BJ (cell line): ENCODE measurements at regions of chr5 and their contacts with region 1.

Region 1: DNA sequence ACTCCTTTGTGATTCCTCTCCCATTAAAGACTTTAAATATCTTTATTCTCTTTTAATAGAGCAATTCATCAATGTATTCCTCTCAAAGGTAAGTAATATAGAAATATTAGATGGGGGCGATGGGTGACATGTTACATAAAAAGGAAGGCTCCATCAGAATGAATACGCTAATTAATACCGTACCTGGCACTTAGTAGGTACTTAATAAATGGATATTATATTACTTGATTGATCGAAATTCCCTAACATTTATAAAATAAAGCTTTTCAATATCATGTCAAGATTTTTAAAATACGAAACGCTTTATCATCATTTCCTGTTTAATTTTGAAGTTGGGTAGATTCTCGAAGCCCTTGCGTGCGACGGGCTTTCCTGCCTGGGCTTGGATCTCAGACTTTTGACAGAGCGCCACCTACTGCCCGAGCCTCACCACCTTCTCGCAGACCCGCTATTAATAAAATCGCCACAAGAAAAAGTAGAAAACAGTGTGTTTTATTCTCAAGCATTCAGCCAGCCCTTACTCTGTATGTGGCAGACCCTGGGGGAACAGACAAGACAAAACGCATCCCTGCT is 99.4 kb downstream of the C5orf15 start:
- DNase-seq: peak; percentile 22
- H3K4me3 ChIP-seq: no peak overlapping the region
- H3K27me3 ChIP-seq: peaks cover 3% of the 10 kb centered on the region
- CTCF ChIP-seq: peak; percentile 81

Region 2: GRCh38 chr5:133111299-133111698 is 757.7 kb before region 1 on chr5:
- CTCF ChIA-PET with region 1: interaction called, 11 read pairs
- POLR2A ChIA-PET with region 1: no interaction called
- DNase-seq: peak; percentile 19
- H3K4me3 ChIP-seq: no peak overlapping the region
- H3K27me3 ChIP-seq: peaks cover 4% of the 10 kb centered on the region; the same call in 1 of the 2 replicates
- CTCF ChIP-seq: peak; percentile 88

Region 3: DNA sequence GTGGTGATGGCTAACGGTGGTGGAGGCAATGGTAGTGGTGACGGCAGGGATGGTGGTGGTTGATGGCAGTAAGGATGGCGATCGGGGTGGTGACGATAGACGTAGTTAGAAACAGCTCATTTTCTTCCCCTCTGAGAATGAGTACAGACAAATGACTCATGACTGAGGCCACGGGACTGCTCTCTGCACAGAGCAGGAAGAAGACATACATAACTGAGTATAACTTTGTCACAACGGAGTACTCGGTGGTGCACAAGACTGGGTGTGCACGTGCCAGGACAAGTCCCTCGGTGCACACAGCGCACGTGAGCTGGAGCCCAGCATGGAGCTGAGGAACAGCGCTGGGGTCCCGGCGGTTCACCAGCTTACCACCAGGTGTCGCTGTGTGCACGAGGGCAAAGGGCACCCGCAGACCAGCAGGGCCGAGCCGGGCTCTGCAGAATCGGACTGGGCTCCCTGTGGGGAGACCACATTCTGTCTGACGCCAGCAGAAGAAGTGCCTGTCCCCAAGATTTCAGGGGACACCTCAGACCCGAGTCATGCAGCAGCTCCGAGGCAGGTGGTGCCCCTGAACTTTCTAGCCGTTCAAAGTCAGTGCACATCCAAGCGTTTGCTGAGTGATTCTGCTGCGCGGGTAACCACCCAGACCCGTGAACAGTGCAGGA is 445.3 kb before region 1 on chr5:
- CTCF ChIA-PET with region 1: interaction called, 19 read pairs
- POLR2A ChIA-PET with region 1: no interaction called
- DNase-seq: no peak
- H3K4me3 ChIP-seq: no peak overlapping the region
- H3K27me3 ChIP-seq: no peaks in the 10 kb centered on the region; the same call in 1 of the 2 replicates
- CTCF ChIP-seq: peak; percentile 84

Region 4: DNA sequence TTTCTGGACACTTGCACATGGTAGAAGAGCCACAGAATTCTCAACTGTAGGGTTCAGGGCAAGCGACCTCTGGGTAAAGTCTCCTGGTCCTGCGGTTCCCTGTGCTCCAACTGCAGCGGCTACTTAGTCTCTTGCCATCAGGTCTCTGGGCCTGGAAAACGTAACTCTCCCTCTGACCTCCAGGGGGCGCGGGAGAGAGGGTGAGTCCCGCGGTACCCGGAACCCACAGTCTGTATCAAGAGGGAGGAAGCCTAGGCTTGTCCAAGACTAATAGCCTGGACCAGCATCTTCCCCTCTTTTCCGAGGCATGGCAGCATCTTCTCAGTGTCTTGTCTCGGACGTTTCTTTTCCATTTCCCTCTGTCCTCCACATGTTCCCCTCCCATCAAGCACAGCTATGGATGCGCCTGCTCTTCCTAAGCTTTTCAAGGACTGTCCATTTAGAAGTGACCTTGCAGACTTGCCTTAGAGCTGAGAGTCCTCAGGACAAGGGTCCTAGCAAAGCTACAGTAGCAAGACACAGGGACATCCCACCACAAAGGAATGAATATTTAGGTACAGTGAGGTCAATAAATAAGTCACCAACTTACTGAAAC is 316.0 kb before region 1 on chr5:
- CTCF ChIA-PET with region 1: interaction called, 14 read pairs
- POLR2A ChIA-PET with region 1: no interaction called
- DNase-seq: no peak
- H3K4me3 ChIP-seq: no peak overlapping the region
- H3K27me3 ChIP-seq: peaks cover 1% of the 10 kb centered on the region; the same call in 1 of the 2 replicates
- CTCF ChIP-seq: peak; percentile 83

Region 5: GRCh38 chr5:133892774-133893173 is 23.7 kb after region 1 on chr5:
- CTCF ChIA-PET with region 1: interaction called, 11 read pairs
- POLR2A ChIA-PET with region 1: no interaction called
- DNase-seq: no peak
- H3K4me3 ChIP-seq: no peak overlapping the region
- H3K27me3 ChIP-seq: peaks cover 4% of the 10 kb centered on the region; the same call in 1 of the 2 replicates
- CTCF ChIP-seq: no peak

Region 6: GRCh38 chr5:133996683-133997252 is 127.7 kb after region 1 on chr5:
- CTCF ChIA-PET with region 1: no interaction called
- POLR2A ChIA-PET with region 1: no interaction called
- DNase-seq: no peak
- H3K4me3 ChIP-seq: no peak overlapping the region
- H3K27me3 ChIP-seq: no peaks in the 10 kb centered on the region
- CTCF ChIP-seq: peak; percentile 53